Spleen (tissue), 13 donors: ENCODE measurements at regions of chr6 and their contacts with region 1.

Region 1: DNA sequence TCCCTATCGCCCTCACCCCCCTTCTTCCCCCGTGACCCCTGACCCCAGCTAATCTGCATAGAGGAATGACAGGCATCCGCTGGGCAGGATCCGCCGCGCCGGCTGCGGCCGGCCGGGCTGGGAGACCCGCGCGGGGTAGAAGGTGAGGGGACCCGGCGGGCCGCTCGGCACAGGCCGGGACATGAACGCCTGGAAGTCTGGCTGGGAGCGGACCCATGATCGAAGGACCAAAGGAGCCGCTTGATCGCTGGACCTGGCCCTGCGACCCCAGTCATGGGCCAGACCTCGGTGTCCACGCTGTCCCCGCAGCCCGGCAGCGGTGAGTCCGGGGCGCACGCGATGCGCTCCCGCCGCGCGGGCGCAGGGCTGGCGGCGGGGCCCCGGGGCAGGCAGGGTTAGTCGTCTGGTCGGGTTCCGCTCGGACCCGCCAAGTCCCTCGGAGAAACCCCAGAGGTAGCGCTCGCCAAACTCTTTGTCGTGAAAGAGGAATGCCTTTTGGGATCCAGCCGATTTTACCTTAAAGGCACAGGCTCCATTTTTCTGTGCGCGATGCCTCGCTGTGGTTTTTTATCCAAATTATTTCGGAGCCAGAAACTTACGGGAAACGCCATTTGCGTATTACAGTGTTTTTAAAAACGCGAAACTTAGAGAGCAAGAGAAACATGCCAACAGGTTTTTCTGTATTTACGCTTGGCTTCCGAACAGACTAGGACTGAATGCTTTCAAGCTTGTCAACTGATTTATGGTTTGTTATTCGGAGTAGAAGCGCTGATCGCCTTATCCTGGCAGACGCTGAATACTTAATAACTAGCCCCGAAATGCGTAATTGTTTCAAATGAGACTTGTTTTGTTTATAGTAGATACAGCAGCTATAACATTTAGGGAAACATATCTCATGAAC is at the start of gene PHACTR2:
- DNase-seq: peak; percentile 88
- H3K4me3 ChIP-seq: peak within 1 kb of the TSS; percentile 52 to 87 (median 74)
- H3K27ac ChIP-seq: peak within 1 kb of the TSS; percentile 59 to 92 (median 88)
- H3K4me1 ChIP-seq: peaks cover 0 to 51% (median 19%) of the 10 kb centered on the region in 6 donors
- H3K27me3 ChIP-seq: peaks cover 0 to 17% (median 0%) of the 10 kb centered on the region in 7 donors
- CTCF ChIP-seq: no peak
- POLR2A ChIP-seq: peak in 1 of 3 donors; percentile 38
- total RNA-seq, gene PHACTR2: 67.3 to 116 (median 82.4) TPM

Region 2: GRCh38 chr6:143734641-143735063 is 56.5 kb after region 1 on chr6:
- intact Hi-C with region 1: no loop called
- DNase-seq: no peak
- H3K4me3 ChIP-seq: no peak overlapping the region
- H3K27ac ChIP-seq: peak overlapping the region in 4 of 8 donors; percentile 3 to 66 (median 14)
- H3K4me1 ChIP-seq: peaks cover 0 to 61% (median 33%) of the 10 kb centered on the region in 6 donors
- H3K27me3 ChIP-seq: no peaks in the 10 kb centered on the region
- CTCF ChIP-seq: no peak
- POLR2A ChIP-seq: no peak

Region 3: DNA sequence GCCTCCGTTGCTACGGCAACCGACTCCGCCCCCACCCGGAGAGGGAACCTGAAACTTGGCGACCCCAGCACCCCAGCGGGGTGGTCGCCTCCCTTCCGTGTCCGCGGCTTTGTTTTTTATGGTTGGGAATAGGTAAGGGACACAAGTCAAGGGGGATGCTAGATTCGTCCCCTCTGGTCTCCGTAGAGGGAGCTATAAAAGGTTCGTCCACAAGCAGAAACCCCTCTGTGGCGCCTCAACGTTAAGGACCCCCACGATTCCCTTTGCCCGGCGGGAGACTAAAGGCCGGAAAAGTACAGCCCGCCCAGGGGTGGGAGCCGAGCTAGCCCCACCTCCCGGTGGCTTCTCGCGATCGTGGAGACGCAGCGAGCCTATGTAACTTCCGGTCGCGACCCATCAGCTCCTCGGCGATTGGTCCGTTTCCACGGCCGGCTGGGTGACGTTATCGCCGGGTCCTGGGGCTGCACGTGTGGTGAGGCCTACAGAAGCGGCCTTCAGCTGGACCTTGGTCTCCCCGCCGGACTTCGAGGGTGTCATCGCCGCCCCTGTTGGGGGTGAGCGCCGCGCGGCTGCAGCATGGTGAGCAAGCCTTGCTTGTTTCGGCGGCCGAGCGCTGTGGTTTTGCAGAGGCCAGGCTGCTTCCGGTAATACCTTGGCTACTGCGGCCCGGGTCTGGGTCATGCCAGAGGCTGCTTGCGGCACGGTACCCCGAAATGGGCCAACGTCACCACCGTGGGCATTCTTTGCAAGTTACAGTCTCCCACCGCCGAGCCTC is 164.9 kb after region 1 on chr6 and contains the start of gene LTV1:
- intact Hi-C with region 1: loop called (anchors 5 kb)
- DNase-seq: peak; percentile 98
- H3K4me3 ChIP-seq: peak within 1 kb of the TSS; percentile 67 to 96 (median 82)
- H3K27ac ChIP-seq: peak within 1 kb of the TSS; percentile 81 to 96 (median 93)
- H3K4me1 ChIP-seq: peaks cover 8 to 36% (median 26%) of the 10 kb centered on the region in 6 donors
- H3K27me3 ChIP-seq: no peaks in the 10 kb centered on the region
- CTCF ChIP-seq: peak in 6 of 11 experiments; percentile 18 to 45 (median 30)
- POLR2A ChIP-seq: peak in 1 of 3 donors; percentile 49
- total RNA-seq, gene LTV1: 12.4 to 25.8 (median 19.0) TPM

Region 4: GRCh38 chr6:143902827-143903226 is 224.7 kb after region 1 on chr6:
- intact Hi-C with region 1: no loop called
- DNase-seq: no peak
- H3K4me3 ChIP-seq: no peak overlapping the region
- H3K27ac ChIP-seq: peak overlapping the region in 4 of 8 donors; percentile 39 to 65 (median 52)
- H3K4me1 ChIP-seq: peaks cover 0 to 18% (median 5%) of the 10 kb centered on the region in 6 donors
- H3K27me3 ChIP-seq: no peaks in the 10 kb centered on the region
- CTCF ChIP-seq: no peak
- POLR2A ChIP-seq: no peak